PC-3 (cell line): ENCODE measurements at regions of chr12 and their contacts with region 1.

Region 1: DNA sequence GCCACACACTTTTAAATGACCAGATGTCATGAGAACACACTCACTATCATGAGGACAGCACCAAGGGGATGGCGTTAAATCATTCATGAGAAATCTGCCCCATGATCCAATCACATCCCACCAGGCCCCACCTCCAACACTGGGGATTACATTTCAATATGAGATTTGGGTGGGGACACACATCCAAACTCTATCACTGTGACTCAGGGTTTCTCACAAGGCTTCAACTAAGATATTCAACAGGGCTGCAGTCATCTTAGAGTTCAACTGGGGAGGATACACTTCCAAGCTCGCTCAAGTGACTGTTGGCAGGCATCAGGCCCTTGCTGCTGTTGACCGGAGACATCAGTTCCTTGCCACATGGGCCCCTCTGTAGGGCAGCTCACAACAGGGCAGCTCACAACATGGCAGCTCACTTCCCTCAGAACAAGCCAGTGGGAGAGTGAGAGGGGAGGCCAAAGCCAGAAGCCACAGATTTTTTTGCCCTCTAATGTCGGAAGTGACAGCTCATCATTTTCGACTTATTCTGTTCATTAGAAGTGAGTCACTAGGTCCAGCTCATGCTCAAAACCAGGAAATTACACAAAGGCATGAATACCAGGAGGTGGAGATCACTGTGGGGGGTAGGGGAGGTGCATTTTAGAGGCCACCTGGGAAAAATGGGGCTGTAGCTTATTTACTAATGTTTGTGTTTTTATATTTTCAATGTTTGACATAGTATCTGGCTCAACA is 50.8 kb upstream of the PTHLH start:
- DNase-seq: peak; percentile 100
- ATAC-seq: peak; percentile 72
- H3K4me3 ChIP-seq: no peak overlapping the region
- H3K27ac ChIP-seq: peak overlapping the region; percentile 79
- H3K4me1 ChIP-seq: peaks cover 73% of the 10 kb centered on the region
- H3K27me3 ChIP-seq: no peaks in the 10 kb centered on the region
- CTCF ChIP-seq: no peak

Region 2: DNA sequence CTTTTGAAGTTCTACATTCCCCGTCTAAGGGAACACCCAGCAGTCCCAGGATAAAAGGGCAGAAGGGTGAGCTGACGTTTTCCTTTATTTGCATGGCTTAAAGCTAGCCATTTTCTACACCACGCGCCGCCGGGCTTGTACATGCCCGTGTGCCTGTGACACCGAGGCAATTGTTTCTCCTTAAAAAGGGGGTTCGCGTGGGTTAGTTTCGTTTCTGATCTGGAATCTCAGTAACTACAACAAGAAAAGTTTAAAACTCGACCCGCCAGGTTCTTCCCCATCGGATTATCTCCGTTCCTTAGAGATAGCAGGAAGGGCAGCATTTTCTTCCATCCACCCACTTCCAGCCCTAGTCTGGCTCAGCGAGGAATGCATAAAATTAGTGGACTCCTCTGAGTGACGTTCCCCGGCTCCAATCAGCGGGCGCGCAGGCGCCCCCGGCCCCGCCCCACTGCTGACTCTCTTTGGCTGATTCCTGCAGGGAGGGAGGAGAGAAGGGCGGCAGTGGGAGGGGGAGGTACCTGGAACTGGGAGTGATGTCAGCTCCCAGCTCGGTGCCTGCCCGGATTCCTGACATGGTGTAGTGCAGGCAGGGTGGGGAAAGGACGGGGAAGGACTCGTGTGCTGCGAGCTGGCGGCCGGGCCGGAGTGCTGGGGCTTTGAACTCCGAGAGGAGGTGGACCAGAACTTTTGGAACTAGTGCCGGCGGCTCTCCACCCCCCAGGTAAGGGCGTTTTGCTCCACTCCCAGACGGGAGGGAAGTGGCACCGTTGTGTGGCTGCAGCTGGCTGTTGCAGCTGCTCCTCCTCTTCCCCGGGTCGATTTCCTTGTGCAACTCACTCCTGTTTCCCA is 499.5 kb before region 1 on chr12 and contains the start of gene PPFIBP1:
- CTCF ChIA-PET with region 1: no interaction called
- POLR2A ChIA-PET with region 1: no interaction called
- intact Hi-C with region 1: no loop called
- DNase-seq: peak; percentile 100
- ATAC-seq: peak; percentile 91
- H3K4me3 ChIP-seq: peak within 1 kb of the TSS; percentile 80
- H3K27ac ChIP-seq: peak within 1 kb of the TSS; percentile 72
- H3K4me1 ChIP-seq: peaks cover 17% of the 10 kb centered on the region
- H3K27me3 ChIP-seq: no peaks in the 10 kb centered on the region
- CTCF ChIP-seq: peak; percentile 39
- total RNA-seq, gene PPFIBP1: 56.9 and 57.2 TPM in 2 replicates

Region 3: DNA sequence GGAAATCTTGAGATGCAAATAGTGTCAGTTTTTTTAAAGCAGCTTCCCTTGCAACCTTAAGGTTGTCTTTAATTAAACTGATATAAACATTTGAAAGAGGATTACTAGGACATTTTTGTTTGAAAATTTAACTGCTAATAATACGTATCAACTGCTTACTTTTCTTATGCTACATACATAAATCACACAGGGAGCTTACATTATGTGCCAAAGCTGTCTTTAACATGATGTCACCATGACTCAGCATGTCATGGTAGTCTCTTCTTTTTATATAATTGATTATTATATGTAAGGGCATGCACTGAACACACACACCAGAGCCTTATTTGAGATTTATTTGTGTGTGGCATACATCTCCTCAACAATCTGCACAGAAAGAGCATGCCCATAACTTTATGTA is 12.2 kb after region 1 on chr12:
- CTCF ChIA-PET with region 1: interaction called, 3 read pairs
- POLR2A ChIA-PET with region 1: interaction called, 8 read pairs
- intact Hi-C with region 1: loop called (anchors 1 kb)
- DNase-seq: peak; percentile 100
- ATAC-seq: peak; percentile 52
- H3K4me3 ChIP-seq: no peak overlapping the region
- H3K27ac ChIP-seq: peak overlapping the region; percentile 77
- H3K4me1 ChIP-seq: peaks cover 40% of the 10 kb centered on the region
- H3K27me3 ChIP-seq: no peaks in the 10 kb centered on the region
- CTCF ChIP-seq: no peak

Region 4: DNA sequence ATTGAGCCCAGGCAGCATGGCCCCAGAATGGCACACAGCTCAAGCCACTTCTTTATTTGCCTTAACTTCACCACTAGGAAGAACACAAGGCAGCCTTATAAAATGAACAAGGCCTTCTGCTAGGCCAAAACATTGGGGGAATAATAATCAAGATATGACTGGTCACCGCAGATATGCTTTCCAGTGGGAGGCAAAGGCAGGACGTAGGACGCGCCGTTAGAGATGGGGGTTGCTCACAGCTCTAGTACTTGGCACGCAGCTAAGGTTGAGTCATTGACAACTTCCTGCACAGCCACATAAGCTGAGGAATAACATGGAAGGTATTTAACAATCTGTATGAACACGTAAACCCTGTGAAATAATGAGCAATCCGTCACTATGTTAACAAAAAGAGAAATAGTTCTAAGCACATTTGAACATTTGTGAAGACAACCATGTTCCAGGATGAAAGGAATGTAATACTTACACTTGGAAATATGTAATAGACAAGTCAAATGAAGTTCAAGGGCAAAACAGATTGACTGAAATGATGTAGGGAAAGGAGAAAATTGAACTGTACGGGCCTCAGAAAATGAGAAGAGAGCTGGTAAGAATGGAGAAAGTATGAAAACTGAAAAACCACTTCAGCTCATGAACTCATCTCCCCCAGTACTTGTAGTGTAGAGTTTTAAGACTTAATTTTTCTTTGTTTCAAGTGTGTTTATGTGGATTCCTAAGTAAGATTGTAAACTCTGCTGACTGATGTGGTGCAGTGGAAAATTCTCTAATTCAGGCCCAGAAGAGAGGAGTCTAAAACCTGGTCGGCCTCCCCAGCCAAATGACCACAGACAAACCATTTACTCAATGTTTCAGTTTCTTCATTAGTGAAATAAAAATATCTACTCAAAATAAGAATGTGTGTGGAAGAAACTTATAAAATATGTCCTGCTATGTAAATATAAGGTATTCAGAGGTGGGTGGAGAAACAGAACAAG is 107.6 kb after region 1 on chr12:
- CTCF ChIA-PET with region 1: no interaction called
- POLR2A ChIA-PET with region 1: no interaction called
- intact Hi-C with region 1: loop called (anchors 2 kb)
- DNase-seq: peak; percentile 98
- ATAC-seq: peak; percentile 98
- H3K4me3 ChIP-seq: 0 out of 2 replicates have a peak overlapping the region, but pooled peaks have one; percentile 9
- H3K27ac ChIP-seq: peak overlapping the region; percentile 92
- H3K4me1 ChIP-seq: peaks cover 31% of the 10 kb centered on the region
- H3K27me3 ChIP-seq: no peaks in the 10 kb centered on the region
- CTCF ChIP-seq: no peak

Region 5: DNA sequence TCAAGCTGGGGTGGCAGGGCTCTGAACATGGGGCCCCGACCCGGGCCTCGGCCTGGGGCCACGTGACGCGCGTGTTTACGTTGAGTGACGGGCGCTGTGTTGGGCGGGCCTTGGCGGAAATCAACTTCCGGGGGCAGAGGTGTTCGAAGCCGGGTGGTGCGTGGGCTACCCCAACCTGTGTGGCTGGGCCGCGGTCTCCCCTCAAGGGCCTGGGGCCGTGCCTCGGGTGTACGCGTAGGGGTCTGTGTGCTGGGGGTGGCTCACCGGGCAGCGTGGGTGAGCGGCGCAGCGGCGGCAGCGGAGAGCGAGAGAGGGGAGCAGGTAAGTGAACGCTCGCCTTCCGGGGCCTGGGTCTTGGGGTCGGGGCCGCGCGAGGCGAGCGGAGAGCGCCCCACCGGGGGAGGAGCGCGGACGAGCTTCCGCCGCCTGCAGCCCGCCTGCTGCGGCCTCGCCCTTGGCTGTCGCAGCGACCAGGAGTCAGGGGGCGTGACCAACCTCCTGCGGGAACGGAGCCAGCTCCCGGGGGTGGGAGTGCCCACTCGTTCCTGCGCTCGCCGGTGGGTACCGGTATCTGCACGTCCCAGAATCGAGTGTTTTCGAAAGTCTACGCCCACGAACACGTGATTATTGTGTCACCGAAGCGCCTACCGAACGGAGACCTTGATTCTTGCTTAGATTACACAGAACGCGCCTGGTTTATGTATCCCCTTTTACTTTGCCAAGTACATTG is 167.2 kb after region 1 on chr12 and contains the start of gene CCDC91:
- CTCF ChIA-PET with region 1: no interaction called
- POLR2A ChIA-PET with region 1: interaction called, 10 read pairs
- intact Hi-C with region 1: no loop called
- DNase-seq: peak; percentile 84
- ATAC-seq: peak; percentile 78
- H3K4me3 ChIP-seq: peak within 1 kb of the TSS; percentile 76
- H3K27ac ChIP-seq: peak within 1 kb of the TSS; percentile 88
- H3K4me1 ChIP-seq: peaks cover 19% of the 10 kb centered on the region
- H3K27me3 ChIP-seq: no peaks in the 10 kb centered on the region
- CTCF ChIP-seq: no peak
- total RNA-seq, gene CCDC91: 15.7 and 22.2 TPM in 2 replicates

Region 6: GRCh38 chr12:28963554-28963953 is 940.2 kb after region 1 on chr12:
- CTCF ChIA-PET with region 1: no interaction called
- POLR2A ChIA-PET with region 1: no interaction called
- intact Hi-C with region 1: loop called (anchors 2 kb)
- DNase-seq: peak; percentile 95
- ATAC-seq: peak; percentile 63
- H3K4me3 ChIP-seq: no peak overlapping the region
- H3K27ac ChIP-seq: no peak overlapping the region
- H3K4me1 ChIP-seq: peaks cover 19% of the 10 kb centered on the region
- H3K27me3 ChIP-seq: no peaks in the 10 kb centered on the region
- CTCF ChIP-seq: peak; percentile 100